Testis (tissue), 5 donors: ENCODE measurements at regions of chr2 and their contacts with region 1.

Region 1: DNA sequence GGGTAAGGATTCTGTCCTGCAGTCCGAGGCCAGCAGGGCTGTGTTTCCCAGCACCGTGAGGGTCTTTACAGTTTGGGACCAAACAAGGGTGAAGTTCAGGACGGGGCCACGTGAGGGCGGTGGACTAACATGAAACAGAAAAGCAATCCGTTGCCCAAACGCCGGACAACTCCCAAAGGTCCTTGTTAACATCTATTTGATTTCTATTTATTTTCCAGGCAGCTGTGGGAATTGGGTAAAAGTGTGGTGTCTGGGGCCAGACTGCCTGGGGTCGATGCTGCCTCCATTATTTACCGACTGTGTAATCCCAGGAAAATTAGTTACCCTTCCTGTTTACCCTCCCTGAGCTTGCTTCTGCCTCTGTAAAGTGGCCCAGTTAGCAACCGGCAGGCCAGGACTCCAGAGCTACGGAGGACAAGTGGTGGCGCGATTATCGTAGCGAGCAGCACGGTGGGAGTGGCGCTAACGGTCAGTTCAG is 66.3 kb upstream of the TCF7L1 start:
- DNase-seq: peak; percentile 86
- H3K4me3 ChIP-seq: peak overlapping the region in 1 of 2 donors; percentile 25
- H3K27ac ChIP-seq: no peak overlapping the region
- H3K4me1 ChIP-seq: peaks cover 9% of the 10 kb centered on the region
- H3K27me3 ChIP-seq: no peaks in the 10 kb centered on the region
- CTCF ChIP-seq: peak; percentile 56 to 72 (median 67)
- POLR2A ChIP-seq: no peak

Region 2: GRCh38 chr2:84970868-84971509 is 95.9 kb before region 1 on chr2 and contains the start of gene KCMF1:
- intact Hi-C with region 1: no loop called
- DNase-seq: peak; percentile 75
- H3K4me3 ChIP-seq: peak within 1 kb of the TSS; percentile 93 to 94
- H3K27ac ChIP-seq: peak within 1 kb of the TSS; percentile 95 to 97
- H3K4me1 ChIP-seq: peaks cover 12% of the 10 kb centered on the region
- H3K27me3 ChIP-seq: no peaks in the 10 kb centered on the region
- CTCF ChIP-seq: no peak
- POLR2A ChIP-seq: no peak
- total RNA-seq, gene KCMF1: 53.9 to 56.9 TPM

Region 3: DNA sequence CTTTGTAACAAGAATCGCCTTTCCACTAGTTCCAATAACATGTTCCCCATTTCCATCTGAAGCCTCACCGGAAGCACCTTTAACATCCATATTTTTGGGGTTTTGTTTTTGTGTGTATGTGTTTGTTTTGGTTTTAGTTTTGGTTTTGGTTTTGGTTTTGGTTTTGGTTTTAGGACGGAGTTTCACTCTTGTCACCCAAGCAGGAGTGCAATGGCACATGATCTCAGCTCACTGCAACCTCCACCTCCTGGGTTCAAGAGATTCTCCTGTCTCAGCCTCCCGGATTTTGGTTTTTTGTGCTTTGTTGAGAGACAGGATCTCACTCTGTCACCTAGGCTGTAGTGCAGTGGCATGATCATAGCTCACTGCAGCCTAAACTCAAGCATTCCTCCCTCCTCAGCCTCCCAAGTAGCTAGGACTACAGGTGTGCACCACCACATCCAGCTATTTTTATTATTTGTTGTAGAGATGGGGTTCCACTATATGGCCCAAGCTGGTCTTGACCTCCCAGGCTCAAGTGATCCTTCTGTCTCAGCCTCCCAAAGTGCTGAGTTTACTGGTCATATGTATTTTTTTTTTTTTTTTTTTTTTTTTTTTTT is 224.6 kb after region 1 on chr2:
- intact Hi-C with region 1: loop called (anchors 5 kb)
- DNase-seq: no peak
- H3K4me3 ChIP-seq: no peak overlapping the region
- H3K27ac ChIP-seq: no peak overlapping the region
- H3K4me1 ChIP-seq: no peaks in the 10 kb centered on the region
- H3K27me3 ChIP-seq: no peaks in the 10 kb centered on the region
- CTCF ChIP-seq: no peak
- POLR2A ChIP-seq: no peak